B cell (primary cell): ENCODE measurements at regions of chr6 and their contacts with region 1.

Region 1: GRCh38 chr6:156809034-156809433 is 31.9 kb downstream of the ARID1B start:
- DNase-seq: peak; percentile 63
- ATAC-seq: peak; percentile 79
- H3K4me3 ChIP-seq: no peak overlapping the region
- H3K4me3 Mint-ChIP-seq: peak overlapping the region; percentile 33
- H3K27ac ChIP-seq: peak overlapping the region; percentile 32 to 48
- H3K27ac Mint-ChIP-seq: peak overlapping the region; percentile 64
- H3K4me1 ChIP-seq: peaks cover 59 to 62% of the 10 kb centered on the region in 2 donors
- H3K4me1 Mint-ChIP-seq: peaks cover 80% of the 10 kb centered on the region
- H3K27me3 ChIP-seq: no peaks in the 10 kb centered on the region
- H3K27me3 Mint-ChIP-seq: no peaks in the 10 kb centered on the region
- CTCF ChIP-seq: no peak

Region 2: DNA sequence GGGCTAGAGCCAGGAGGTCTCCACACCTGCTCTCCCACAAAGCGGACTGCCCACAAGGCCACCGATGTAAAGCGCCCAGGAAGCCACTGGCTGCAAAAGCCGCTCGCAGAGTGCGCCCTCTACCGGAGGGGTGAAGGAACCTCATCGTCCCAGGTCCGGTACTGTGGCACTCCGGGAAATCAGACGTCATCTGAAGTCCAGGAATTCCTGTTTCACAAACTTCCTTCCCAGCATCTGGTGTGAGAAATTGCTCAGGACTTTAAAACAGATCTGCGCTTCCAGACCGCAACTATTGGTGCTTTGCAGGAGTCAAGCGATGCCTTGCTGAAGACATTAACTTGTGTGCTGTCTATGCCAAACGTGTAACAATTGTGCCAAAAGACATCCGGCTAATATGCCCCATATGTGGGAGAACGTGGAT is 147.0 kb before region 1 on chr6:
- CTCF ChIA-PET with region 1: no interaction called
- POLR2A ChIA-PET with region 1: no interaction called
- intact Hi-C with region 1: no loop called
- DNase-seq: peak; percentile 22
- ATAC-seq: no peak
- H3K4me3 ChIP-seq: peak overlapping the region in 1 of 5 experiments; percentile 13
- H3K4me3 Mint-ChIP-seq: no peak overlapping the region
- H3K27ac ChIP-seq: no peak overlapping the region
- H3K27ac Mint-ChIP-seq: no peak overlapping the region
- H3K4me1 ChIP-seq: peaks cover 0 to 7% of the 10 kb centered on the region in 2 donors
- H3K4me1 Mint-ChIP-seq: peaks cover 12% of the 10 kb centered on the region
- H3K27me3 ChIP-seq: no peaks in the 10 kb centered on the region
- H3K27me3 Mint-ChIP-seq: no peaks in the 10 kb centered on the region
- CTCF ChIP-seq: no peak

Region 3: DNA sequence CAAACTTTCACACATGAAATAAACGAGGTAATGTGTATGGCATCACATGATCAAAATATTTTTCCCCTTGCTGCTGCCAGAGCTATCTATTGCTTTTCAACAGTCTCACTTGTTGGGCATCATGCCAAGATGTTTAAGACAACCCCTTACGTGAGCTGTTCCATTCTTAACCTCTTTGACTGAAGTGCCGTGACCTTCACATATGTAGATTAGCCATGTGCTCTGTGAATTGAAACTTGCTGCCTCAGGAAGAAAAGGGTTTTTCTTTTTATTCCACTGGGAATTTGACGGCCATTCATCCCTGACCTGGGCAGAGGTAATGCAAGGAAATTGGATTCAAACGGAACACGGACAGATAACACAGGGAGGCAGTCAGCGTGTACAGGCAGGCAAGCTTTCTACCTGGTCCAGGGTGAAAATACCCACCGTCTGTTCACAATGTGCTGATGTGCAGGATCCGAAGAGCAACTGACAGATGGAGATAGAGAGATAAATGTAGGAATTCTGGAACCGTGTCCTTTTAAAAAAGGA is 17.6 kb before region 1 on chr6:
- CTCF ChIA-PET with region 1: interaction called, 5 read pairs
- POLR2A ChIA-PET with region 1: interaction called, 7 read pairs
- intact Hi-C with region 1: loop called (anchors 2 kb)
- DNase-seq: peak; percentile 83
- ATAC-seq: peak; percentile 84
- H3K4me3 ChIP-seq: no peak overlapping the region
- H3K4me3 Mint-ChIP-seq: peak overlapping the region; percentile 63
- H3K27ac ChIP-seq: peak overlapping the region in 1 of 2 donors; percentile 44
- H3K27ac Mint-ChIP-seq: peak overlapping the region; percentile 60
- H3K4me1 ChIP-seq: peaks cover 77 to 88% of the 10 kb centered on the region in 2 donors
- H3K4me1 Mint-ChIP-seq: peaks cover 95% of the 10 kb centered on the region
- H3K27me3 ChIP-seq: no peaks in the 10 kb centered on the region
- H3K27me3 Mint-ChIP-seq: no peaks in the 10 kb centered on the region
- CTCF ChIP-seq: no peak

Region 4: DNA sequence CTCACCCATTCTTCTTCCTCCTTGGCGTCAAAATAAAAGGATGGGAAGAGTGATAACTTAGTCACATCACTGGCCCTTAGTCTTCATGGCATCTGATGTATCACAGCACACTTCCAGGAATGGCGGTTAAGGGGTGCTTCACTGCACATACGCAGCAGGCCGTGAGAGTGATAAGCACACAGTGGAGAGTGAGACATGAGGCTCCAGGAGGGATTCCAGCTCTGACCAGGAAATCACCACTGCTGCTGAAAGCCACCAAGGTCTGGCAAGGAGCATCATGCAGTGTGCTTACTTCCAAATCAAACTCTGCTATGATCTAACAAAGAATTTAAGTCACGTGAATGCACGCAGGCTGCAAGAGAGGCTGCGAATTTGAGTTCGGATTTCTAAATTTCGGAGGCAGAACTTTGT is 30.6 kb after region 1 on chr6:
- CTCF ChIA-PET with region 1: no interaction called
- POLR2A ChIA-PET with region 1: no interaction called
- intact Hi-C with region 1: loop called (anchors 5 kb)
- DNase-seq: no peak
- ATAC-seq: no peak
- H3K4me3 ChIP-seq: no peak overlapping the region
- H3K4me3 Mint-ChIP-seq: no peak overlapping the region
- H3K27ac ChIP-seq: peak overlapping the region in 1 of 2 donors; percentile 14
- H3K27ac Mint-ChIP-seq: peak overlapping the region; percentile 70
- H3K4me1 ChIP-seq: peaks cover 32 to 36% of the 10 kb centered on the region in 2 donors
- H3K4me1 Mint-ChIP-seq: peaks cover 55% of the 10 kb centered on the region
- H3K27me3 ChIP-seq: no peaks in the 10 kb centered on the region
- H3K27me3 Mint-ChIP-seq: no peaks in the 10 kb centered on the region
- CTCF ChIP-seq: no peak